Posterior vena cava (tissue), 2 donors: ENCODE measurements at regions of chr11 and their contacts with region 1.

Region 1: GRCh38 chr11:56271092-56271491 is 2.9 kb upstream of the OR5T1 start:
- DNase-seq: no peak

Region 2: DNA sequence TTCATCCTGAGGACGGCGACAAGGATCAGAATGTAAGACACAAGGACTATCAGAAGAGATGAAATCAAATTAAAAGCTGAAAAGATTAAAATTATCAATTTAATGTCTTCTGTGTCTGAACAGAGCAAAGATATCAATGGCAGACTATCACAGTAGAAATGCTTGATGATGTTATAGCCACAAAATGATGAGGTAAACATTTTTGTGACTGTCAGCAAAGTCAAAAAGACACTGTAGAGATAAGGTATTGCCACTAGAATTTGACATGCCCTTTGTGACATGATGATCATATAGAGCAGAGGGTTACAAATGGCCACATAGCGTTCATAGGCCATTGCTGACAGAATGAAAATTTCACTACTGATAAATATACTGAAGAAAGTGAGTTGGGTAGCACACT is 82.5 kb before region 1 on chr11:
- intact Hi-C with region 1: no loop called
- DNase-seq: no peak

Region 3: DNA sequence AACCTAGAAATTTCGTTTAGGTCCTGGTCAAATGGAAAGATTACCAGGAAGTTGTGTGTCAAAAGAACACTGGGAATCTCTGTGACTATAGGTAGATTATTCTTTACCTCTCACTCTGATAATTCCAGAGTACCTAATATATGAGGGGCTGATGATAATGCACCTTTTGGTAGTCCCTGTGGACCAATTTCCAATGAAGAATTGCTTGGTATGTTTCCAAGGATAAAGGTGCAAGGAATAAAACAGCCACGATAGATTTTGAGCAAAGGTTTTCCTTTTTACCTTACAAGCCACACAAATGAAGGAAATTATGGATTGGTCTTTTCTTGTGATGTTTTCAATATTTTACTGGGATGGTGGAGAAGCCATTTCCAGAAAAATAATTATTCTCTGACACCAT is 21.1 kb after region 1 on chr11 and contains the start of gene OR8H1:
- intact Hi-C with region 1: loop called in 1 of 2 experiments (anchors 2 kb)
- DNase-seq: no peak
- total RNA-seq, gene OR8H1: not detected

Region 4: GRCh38 chr11:56396047-56396446 is 125.0 kb after region 1 on chr11:
- intact Hi-C with region 1: no loop called
- DNase-seq: no peak